Panc1 (cell line): ENCODE measurements at regions of chr9 and their contacts with region 1.

Region 1: DNA sequence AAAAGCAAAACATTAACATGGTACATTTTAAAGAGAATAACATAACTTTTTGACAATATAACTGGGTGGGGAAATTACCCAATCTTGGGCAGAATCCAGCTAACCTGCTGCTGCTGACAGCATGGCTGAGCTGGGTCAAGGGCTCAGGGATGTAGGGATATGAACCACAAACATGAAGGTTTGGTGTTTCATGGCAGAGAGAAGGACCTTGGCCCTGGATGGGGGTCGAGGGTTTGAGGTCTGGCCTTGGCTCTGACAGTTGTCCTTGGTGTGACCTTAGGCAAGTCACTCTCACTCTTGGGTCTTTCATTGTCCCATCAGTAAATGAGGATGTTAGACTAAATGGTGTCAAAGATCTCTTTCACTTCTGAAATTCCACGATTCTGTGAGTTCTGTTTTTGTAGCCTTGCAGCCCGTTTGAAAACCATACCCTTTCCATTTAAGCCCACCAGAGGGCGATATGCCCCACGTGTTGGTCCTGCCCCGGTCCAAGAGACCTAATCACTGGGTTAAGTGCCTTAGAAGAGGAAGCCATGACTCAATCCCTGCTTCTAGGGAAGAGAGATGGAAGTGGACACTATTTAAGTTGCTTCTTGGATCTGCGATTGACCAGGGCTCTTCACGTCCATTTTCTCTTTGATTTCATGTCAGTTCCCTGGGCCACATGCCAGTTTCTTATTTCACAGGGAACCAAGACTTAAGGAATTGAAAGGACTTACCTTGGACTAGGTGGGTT is 56.8 kb upstream of the TEX48 start:
- DNase-seq: peak; percentile 35
- ATAC-seq: peak; percentile 70; the same call in 1 of the 2 replicates
- H3K4me3 ChIP-seq: no peak overlapping the region
- H3K27ac ChIP-seq: no peak overlapping the region
- H3K4me1 ChIP-seq: no peaks in the 10 kb centered on the region
- H3K27me3 ChIP-seq: no peaks in the 10 kb centered on the region
- CTCF ChIP-seq: peak; percentile 76

Region 2: DNA sequence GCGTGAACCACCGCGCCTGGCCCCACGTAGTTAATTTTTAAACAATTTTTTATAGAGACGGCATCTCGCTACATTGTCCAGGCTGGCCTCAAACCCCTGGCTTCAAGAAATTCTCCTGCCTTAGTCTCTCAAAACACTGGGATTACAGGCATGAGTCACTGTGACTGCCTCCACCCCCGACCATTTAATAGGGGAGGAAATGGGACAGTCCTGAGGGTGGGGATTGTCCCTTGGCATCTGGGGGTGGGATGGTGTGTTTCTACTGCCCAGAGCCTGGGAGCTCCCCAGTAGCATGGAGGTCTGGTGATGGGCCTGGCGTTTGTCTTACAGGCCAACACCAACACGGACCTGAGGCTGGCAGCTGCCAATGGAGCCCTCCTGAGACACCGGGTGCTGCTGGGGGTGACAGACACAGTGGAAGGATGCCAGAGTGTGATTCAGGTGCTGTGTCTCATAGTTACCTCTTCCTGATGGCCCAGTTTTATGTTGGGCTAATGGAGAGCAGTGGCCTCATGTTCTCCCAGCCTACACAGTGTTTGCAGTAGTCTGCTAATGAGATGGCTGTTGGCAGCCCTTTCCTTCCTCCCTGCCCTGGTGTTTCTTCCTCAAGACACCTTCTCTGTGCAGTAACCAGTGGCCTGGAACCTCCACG is 105.2 kb before region 1 on chr9:
- CTCF ChIA-PET with region 1: no interaction called
- POLR2A ChIA-PET with region 1: no interaction called
- in situ Hi-C with region 1: no loop called
- intact Hi-C with region 1: no loop called
- DNase-seq: no peak
- ATAC-seq: no peak
- H3K4me3 ChIP-seq: no peak overlapping the region
- H3K27ac ChIP-seq: no peak overlapping the region
- H3K4me1 ChIP-seq: no peaks in the 10 kb centered on the region
- H3K27me3 ChIP-seq: no peaks in the 10 kb centered on the region
- CTCF ChIP-seq: no peak

Region 3: GRCh38 chr9:114906908-114907571 is 168.3 kb after region 1 on chr9:
- CTCF ChIA-PET with region 1: interaction called, 3 read pairs
- POLR2A ChIA-PET with region 1: no interaction called
- in situ Hi-C with region 1: no loop called
- intact Hi-C with region 1: loop called (anchors 2 kb)
- DNase-seq: no peak
- ATAC-seq: no peak; the same call in 1 of the 2 replicates
- H3K4me3 ChIP-seq: no peak overlapping the region
- H3K27ac ChIP-seq: no peak overlapping the region
- H3K4me1 ChIP-seq: no peaks in the 10 kb centered on the region
- H3K27me3 ChIP-seq: no peaks in the 10 kb centered on the region
- CTCF ChIP-seq: peak; percentile 21; the same call in 1 of the 2 replicates

Region 4: GRCh38 chr9:115013998-115014397 is 275.2 kb after region 1 on chr9:
- CTCF ChIA-PET with region 1: no interaction called
- POLR2A ChIA-PET with region 1: no interaction called
- in situ Hi-C with region 1: no loop called
- intact Hi-C with region 1: loop called (anchors 2 kb)
- DNase-seq: no peak
- ATAC-seq: peak; percentile 85
- H3K4me3 ChIP-seq: no peak overlapping the region
- H3K27ac ChIP-seq: no peak overlapping the region
- H3K4me1 ChIP-seq: no peaks in the 10 kb centered on the region
- H3K27me3 ChIP-seq: no peaks in the 10 kb centered on the region
- CTCF ChIP-seq: peak; percentile 72

Region 5: GRCh38 chr9:115524453-115525059 is 785.8 kb after region 1 on chr9:
- CTCF ChIA-PET with region 1: no interaction called
- POLR2A ChIA-PET with region 1: no interaction called
- in situ Hi-C with region 1: no loop called
- intact Hi-C with region 1: loop called (anchors 10 kb)
- DNase-seq: peak; percentile 12
- ATAC-seq: no peak
- H3K4me3 ChIP-seq: no peak overlapping the region
- H3K27ac ChIP-seq: no peak overlapping the region
- H3K4me1 ChIP-seq: no peaks in the 10 kb centered on the region
- H3K27me3 ChIP-seq: no peaks in the 10 kb centered on the region
- CTCF ChIP-seq: peak; percentile 54